ENCODE measurements at regions of chr7 and their contacts with region 1.

Region 1: DNA sequence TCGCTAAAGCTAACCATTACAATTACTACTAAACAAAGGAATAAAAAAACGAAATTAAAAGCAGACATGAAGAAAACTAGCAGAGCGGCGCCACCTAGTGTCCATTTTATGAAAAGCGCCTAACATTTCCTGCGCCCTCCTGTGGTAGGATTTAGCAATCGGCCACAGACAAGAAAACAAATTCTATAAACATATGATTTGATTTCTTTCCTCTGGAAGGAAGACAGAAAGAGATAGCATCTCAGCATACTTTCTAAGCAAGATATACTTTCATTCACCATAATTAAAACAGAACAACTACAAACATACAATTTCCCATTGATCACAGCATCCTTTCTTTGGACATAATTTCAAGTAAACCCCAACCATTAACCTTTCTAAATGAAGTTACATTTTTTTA is 337.7 kb upstream of the NPVF start:
- DNase-seq: no peak
- H3K4me3 ChIP-seq: no peak overlapping the region
- H3K27ac ChIP-seq: peak overlapping the region in 2 of 4 donors; percentile 53 to 63
- H3K4me1 ChIP-seq: peaks cover 0 to 20% (median 3%) of the 10 kb centered on the region in 3 donors
- H3K27me3 ChIP-seq: no peaks in the 10 kb centered on the region
- CTCF ChIP-seq: peak; percentile 98 to 100 (median 98)
- POLR2A ChIP-seq: no peak

Region 2: GRCh38 chr7:24336461-24336860 is 1229.5 kb before region 1 on chr7:
- intact Hi-C with region 1: no loop called
- DNase-seq: no peak
- H3K4me3 ChIP-seq: no peak overlapping the region
- H3K27ac ChIP-seq: no peak overlapping the region
- H3K4me1 ChIP-seq: no peaks in the 10 kb centered on the region
- H3K27me3 ChIP-seq: peaks cover 0 to 12% (median 0%) of the 10 kb centered on the region in 4 donors
- CTCF ChIP-seq: no peak
- POLR2A ChIP-seq: no peak

Region 3: GRCh38 chr7:24825931-24826661 is 739.9 kb before region 1 on chr7:
- intact Hi-C with region 1: no loop called
- DNase-seq: no peak
- H3K4me3 ChIP-seq: peak overlapping the region in 1 of 4 donors; percentile 2
- H3K27ac ChIP-seq: peak overlapping the region; percentile 77 to 87 (median 82)
- H3K4me1 ChIP-seq: peaks cover 6 to 65% (median 35%) of the 10 kb centered on the region in 3 donors
- H3K27me3 ChIP-seq: no peaks in the 10 kb centered on the region
- CTCF ChIP-seq: no peak
- POLR2A ChIP-seq: no peak

Region 4: DNA sequence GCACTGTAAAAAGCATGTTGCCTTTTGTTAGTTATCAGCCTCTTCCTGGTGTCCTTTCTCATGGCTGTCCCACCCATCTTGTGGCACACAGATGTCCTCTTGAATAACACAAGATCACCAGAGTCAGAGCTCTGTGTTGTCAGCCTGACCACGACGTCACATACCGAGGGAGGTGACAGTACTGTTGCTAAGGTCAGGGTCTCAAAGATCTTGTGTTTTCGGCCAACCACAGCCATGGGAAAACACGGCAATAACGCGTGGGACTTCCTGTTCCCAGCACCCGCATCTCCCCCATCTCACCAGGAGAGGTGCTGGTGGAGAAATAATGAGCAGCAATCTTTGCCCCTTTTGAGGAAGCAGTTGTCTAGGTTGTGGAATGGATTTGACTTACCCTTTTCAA is 378.0 kb before region 1 on chr7:
- intact Hi-C with region 1: no loop called
- DNase-seq: no peak
- H3K4me3 ChIP-seq: no peak overlapping the region
- H3K27ac ChIP-seq: no peak overlapping the region
- H3K4me1 ChIP-seq: no peaks in the 10 kb centered on the region
- H3K27me3 ChIP-seq: peaks cover 0 to 4% (median 0%) of the 10 kb centered on the region in 4 donors
- CTCF ChIP-seq: no peak
- POLR2A ChIP-seq: no peak

Region 5: GRCh38 chr7:25259587-25260243 is 306.2 kb before region 1 on chr7:
- intact Hi-C with region 1: loop called (anchors 5 kb)
- DNase-seq: peak; percentile 7
- H3K4me3 ChIP-seq: no peak overlapping the region
- H3K27ac ChIP-seq: no peak overlapping the region
- H3K4me1 ChIP-seq: peaks cover 0 to 10% (median 0%) of the 10 kb centered on the region in 3 donors
- H3K27me3 ChIP-seq: no peaks in the 10 kb centered on the region
- CTCF ChIP-seq: peak; percentile 74 to 78 (median 78)
- POLR2A ChIP-seq: no peak

Region 6: DNA sequence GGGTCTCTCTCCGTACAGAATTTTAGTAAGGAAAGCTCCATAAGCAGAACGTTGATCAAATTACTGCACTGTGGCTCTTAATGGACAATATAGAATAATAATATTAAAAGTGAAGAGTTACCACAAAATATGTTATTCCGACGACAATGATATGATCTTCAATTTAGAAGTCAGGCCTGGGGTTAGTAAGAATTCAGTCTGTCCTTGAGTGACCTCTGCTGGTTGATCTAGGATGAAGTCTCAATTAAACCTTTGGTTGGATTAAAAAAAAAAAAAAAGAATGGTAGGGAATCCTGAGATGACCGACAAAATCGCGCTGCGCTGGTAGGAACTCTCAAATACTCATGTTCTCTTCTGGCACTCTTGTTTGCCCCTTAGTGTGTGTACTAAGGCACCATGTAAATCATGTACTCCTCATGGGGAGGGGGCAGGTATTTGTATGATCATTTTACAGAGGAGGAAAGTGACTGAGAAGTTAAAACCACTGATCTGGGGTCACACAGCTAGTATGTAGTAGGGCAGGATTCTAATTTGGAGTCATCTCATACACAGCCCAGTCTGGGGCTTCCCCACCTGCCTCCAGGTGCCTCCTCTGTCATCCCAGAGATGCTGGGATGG is 176.4 kb before region 1 on chr7:
- intact Hi-C with region 1: loop called (anchors 5 kb)
- DNase-seq: no peak
- H3K4me3 ChIP-seq: no peak overlapping the region
- H3K27ac ChIP-seq: no peak overlapping the region
- H3K4me1 ChIP-seq: peaks cover 12 to 42% (median 14%) of the 10 kb centered on the region in 3 donors
- H3K27me3 ChIP-seq: peaks cover 0 to 7% (median 0%) of the 10 kb centered on the region in 4 donors
- CTCF ChIP-seq: peak in 5 of 6 experiments; percentile 48 to 60 (median 52)
- POLR2A ChIP-seq: no peak

Region 7: DNA sequence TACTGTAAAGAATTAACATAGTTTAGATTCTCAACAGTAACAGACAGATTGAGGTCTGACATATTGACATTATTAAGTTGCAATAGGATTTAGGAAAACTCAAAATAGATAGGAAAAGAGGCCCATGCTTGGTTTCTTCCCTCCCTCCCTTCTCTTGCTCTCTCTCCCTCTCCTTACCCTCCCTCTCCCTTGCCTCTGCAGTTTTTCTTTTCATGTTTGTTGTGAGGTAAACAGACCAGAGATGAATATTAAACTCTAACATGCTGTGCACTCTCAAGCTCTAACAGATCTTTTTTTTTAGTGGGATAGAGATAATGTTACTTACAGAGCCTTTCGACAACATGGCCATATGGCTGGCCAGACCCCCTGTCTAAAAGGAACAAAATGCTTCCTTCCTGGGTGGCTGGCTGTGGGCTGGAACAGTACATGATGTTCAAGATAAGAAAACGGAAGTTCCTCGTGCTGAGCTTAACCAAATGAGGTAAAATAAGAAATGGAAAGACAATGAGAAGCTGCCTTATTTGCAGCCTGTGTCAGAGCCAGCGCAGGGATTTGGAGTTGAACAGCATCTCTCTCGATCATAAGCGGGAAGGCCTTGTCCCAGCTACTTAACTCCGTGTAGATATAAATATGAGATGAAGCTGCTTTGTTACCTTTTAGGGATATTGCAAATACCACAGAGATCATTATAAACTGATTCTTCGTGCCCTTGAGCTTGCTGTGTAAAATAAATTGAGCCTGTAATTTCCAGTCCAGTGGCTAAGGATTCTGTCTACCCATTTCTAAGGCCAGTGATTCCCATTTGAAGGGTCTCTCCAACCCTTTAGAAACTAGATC is 54.2 kb after region 1 on chr7:
- intact Hi-C with region 1: no loop called
- DNase-seq: no peak
- H3K4me3 ChIP-seq: peak overlapping the region in 1 of 4 donors; percentile 7
- H3K27ac ChIP-seq: peak overlapping the region; percentile 71 to 89 (median 86)
- H3K4me1 ChIP-seq: peaks cover 0 to 25% (median 12%) of the 10 kb centered on the region in 3 donors
- H3K27me3 ChIP-seq: no peaks in the 10 kb centered on the region
- CTCF ChIP-seq: no peak
- POLR2A ChIP-seq: peak in 1 of 4 donors; percentile 37

Measured in esophagus squamous epithelium (tissue), 5 donors.